HCT116 (cell line): ENCODE measurements at regions of chr17 and their contacts with region 1.

Region 1: GRCh38 chr17:36705874-36706731 is 104.7 kb downstream of the MRM1 start:
- DNase-seq: peak; percentile 18
- ATAC-seq: peak; percentile 95
- H3K4me3 ChIP-seq: no peak overlapping the region
- H3K27ac ChIP-seq: no peak overlapping the region
- H3K4me1 ChIP-seq: no peaks in the 10 kb centered on the region
- H3K27me3 ChIP-seq: peaks cover 2% of the 10 kb centered on the region; the same call in 1 of the 2 replicates
- CTCF ChIP-seq: peak; percentile 65 to 90 (median 85); a peak in 5 of 6 replicates
- POLR2A ChIP-seq: no peak
- RAD21 ChIP-seq: peak; percentile 82

Region 2: DNA sequence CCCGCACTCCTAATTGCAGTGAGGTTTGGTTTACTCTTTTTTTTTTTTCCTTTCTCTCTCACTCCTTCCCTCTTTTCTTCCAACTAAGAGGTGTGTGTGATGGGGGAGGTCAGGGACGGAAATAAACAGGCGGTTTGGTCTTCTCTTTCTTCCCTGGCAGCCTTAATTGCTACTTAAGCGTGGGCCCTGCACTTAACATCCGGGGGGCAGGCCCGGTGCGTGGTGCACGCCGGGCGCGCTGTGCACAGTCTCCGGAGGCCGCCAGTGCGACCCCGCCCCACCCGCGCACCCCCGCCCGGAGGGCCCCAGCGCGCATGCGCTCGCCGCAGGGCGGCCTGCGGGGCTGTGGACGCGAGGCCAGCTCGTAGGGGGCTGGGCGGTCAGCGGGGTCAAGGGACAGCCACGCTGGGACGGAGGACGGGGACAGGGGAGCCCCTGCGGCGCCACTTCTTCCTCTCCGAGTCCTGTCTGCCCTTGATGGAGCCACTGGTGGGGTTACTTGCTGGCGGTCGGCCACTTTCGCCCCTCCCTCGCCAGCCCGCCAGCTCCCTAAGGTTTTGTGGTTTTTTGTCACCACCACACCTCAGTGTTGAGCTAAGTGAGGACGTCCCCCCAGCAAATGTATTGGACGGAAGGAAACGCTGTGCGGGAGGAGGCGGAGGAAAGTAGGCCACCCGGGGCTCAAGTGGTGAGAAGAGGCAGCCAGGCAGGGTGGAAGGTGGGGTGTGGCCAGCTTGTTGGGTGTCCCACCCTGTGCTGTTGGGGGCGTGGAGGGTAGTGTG is 16.2 kb after region 1 on chr17:
- CTCF ChIA-PET with region 1: no interaction called
- POLR2A ChIA-PET with region 1: no interaction called
- RAD21 ChIA-PET with region 1: no interaction called
- intact Hi-C with region 1: no loop called
- DNase-seq: no peak
- ATAC-seq: no peak
- H3K4me3 ChIP-seq: no peak overlapping the region
- H3K27ac ChIP-seq: no peak overlapping the region
- H3K4me1 ChIP-seq: no peaks in the 10 kb centered on the region
- H3K27me3 ChIP-seq: 0 out of 2 replicates have a peak, but pooled peaks cover 11% of the 10 kb centered on the region
- CTCF ChIP-seq: no peak
- POLR2A ChIP-seq: no peak
- RAD21 ChIP-seq: no peak

Region 3: DNA sequence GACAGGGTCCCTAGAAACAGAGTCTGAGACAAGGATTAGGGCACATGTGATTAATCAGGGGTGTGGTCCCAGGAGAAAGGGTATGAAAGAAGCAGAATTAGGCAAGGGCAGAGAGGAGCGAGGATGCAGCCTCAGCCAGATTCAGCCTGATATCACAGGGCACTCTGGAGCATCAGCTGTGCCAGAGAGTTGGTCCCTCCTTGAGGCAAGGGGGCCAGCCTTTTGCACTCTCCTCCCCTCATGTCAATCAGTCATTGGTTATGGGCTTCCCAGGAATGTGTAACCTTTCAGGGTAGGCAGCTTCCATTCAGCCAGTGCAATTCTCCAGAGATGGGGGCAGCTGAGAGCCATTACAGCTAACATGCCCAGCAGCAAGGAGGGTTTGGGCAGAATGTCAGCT is 78.5 kb after region 1 on chr17:
- CTCF ChIA-PET with region 1: no interaction called
- POLR2A ChIA-PET with region 1: no interaction called
- RAD21 ChIA-PET with region 1: no interaction called
- intact Hi-C with region 1: loop called (anchors 10 kb)
- DNase-seq: no peak
- ATAC-seq: no peak
- H3K4me3 ChIP-seq: no peak overlapping the region
- H3K27ac ChIP-seq: no peak overlapping the region
- H3K4me1 ChIP-seq: no peaks in the 10 kb centered on the region
- H3K27me3 ChIP-seq: peaks cover 49% of the 10 kb centered on the region
- CTCF ChIP-seq: no peak
- POLR2A ChIP-seq: no peak
- RAD21 ChIP-seq: no peak